ENCODE measurements at regions of chr9 and their contacts with region 1.

Region 1: DNA sequence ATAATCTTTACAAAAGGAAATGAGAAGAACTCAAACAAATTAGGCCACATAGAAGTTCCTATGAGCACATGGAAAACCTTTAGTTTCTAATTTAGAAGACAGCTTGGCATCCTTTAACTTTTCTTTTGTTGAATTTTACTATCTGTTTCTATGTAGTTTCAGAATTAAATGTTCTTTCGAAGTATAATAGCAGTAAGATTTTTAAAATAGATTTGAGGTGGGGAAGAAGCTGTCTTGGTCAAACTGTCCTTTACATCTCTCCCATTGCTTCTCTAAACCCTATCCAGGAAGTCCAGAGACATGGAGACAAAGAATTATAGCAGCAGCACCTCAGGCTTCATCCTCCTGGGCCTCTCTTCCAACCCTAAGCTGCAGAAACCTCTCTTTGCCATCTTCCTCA is at the start of gene OR1L4:
- DNase-seq: no peak
- H3K4me3 ChIP-seq: no peak within 1 kb of the TSS
- H3K27ac ChIP-seq: no peak within 1 kb of the TSS
- H3K4me1 ChIP-seq: no peaks in the 10 kb centered on the region
- H3K27me3 ChIP-seq: no peaks in the 10 kb centered on the region
- CTCF ChIP-seq: no peak
- total RNA-seq, gene OR1L4: not detected in 2 replicates

Region 2: DNA sequence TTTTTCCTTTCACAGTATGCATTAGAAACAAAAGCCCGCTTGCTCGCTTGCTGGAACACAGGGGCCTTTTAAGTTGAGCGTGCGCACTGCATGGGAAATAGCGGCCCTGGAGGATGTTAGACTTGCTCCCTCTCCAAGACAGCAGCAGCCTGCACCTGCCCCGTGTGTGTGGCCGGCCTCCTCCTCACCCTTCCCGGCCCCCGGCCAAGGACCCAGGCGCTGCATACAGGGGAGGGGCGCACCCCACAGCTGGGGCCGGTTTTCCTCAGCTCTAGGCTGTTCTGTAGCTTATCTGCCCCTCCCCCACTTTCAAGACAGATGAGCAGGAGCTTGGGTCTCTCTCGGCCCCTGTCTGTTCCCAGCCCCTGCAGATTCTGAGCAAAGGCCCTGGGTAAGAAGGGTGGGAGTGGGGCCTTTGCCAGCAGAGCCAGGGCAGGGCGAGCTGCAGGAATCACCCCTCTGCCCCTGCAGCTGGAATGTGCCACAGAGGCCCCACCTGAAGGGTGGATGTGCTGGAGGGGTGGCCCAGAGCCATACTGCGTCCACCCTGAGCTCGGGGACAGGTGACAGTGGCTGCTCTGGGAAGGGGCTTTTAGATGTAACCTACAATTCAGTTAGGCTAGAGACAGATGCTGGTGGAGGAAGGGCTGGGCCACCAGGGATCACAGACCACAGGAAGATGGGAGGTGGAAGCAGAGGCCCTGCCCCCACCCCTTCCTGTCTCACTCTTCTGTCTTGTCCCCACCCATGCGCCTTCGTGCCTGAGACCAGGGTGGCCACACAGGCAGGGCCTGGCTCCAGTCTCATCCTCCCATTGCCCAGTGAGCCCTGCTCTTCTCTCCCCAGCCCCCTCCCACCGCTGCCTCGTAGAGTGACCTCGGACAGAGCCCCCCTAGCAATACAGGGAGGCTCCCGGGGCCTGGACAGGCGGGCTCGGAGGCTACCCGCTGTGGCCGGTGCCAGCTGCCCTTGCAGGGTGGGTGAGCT is 939.9 kb before region 1 on chr9:
- CTCF ChIA-PET with region 1: no interaction called
- POLR2A ChIA-PET with region 1: no interaction called
- intact Hi-C with region 1: no loop called
- DNase-seq: no peak
- H3K4me3 ChIP-seq: no peak overlapping the region
- H3K27ac ChIP-seq: no peak overlapping the region
- H3K4me1 ChIP-seq: no peaks in the 10 kb centered on the region
- H3K27me3 ChIP-seq: no peaks in the 10 kb centered on the region
- CTCF ChIP-seq: no peak

Region 3: DNA sequence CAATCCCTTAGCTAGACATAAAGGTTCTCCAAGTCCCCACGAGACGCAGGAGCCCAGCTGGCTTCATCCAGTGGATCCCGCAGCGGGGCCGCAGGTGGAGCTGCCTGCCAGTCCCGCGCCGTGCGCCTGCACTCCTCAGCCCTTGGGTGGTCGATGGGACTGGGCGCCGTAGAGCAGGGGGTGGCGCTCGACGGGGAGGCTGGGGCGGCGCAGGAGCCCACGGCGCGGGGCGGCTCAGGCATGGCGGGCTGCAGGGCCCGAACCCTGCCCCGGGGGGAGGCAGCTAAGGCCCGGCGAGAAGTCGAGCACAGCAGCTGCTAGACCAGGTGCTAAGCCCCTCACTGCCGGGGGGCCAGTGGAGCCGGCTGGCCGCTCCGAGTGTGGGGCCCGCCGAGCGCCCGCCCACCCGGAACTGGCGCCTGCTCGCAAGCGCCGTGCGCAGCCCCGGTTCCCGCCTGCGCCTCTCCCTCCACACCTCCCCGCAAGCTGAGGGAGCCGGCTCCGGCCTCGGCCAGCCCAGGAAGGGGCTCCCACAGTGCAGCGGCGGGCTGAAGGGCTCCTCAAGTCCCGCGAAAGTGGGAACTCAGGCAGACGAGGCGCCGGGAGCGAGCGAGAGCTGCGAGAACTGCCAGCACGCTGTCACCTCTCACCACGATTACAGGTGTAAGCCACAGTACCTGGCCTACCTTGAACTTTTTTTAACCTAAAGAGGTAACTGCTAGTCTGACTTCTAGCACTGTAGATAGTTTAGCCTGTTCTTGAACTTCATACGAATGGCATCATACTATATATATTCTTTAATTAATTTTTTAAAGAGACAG is 317.4 kb before region 1 on chr9:
- CTCF ChIA-PET with region 1: no interaction called
- POLR2A ChIA-PET with region 1: no interaction called
- intact Hi-C with region 1: no loop called
- DNase-seq: no peak
- H3K4me3 ChIP-seq: no peak overlapping the region
- H3K27ac ChIP-seq: no peak overlapping the region
- H3K4me1 ChIP-seq: no peaks in the 10 kb centered on the region
- H3K27me3 ChIP-seq: 0 out of 2 replicates have a peak, but pooled peaks cover 2% of the 10 kb centered on the region
- CTCF ChIP-seq: no peak

Region 4: DNA sequence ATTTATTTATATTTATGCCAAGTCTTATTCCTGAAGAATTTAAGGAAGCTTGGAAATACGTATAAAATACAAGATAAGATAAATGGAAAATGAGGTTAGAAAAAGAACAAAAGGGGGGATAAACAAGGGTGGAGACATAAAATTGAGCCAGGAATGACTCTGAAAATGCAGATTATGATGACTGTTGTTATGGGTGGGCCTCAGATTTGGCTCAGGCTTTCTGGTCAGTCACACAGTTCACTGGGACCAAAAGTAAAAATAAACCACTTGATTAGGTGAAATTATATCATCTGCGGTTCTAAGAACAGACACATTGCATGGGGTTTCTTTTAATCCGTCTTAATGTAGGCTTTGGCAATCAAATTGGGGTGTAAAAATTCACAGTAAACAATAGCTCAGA is 297.0 kb before region 1 on chr9:
- CTCF ChIA-PET with region 1: no interaction called
- POLR2A ChIA-PET with region 1: no interaction called
- intact Hi-C with region 1: no loop called
- DNase-seq: no peak
- H3K4me3 ChIP-seq: no peak overlapping the region
- H3K27ac ChIP-seq: no peak overlapping the region
- H3K4me1 ChIP-seq: no peaks in the 10 kb centered on the region
- H3K27me3 ChIP-seq: 0 out of 2 replicates have a peak, but pooled peaks cover 9% of the 10 kb centered on the region
- CTCF ChIP-seq: no peak

Region 5: GRCh38 chr9:122526600-122526999 is 197.1 kb before region 1 on chr9:
- CTCF ChIA-PET with region 1: no interaction called
- POLR2A ChIA-PET with region 1: no interaction called
- intact Hi-C with region 1: no loop called
- DNase-seq: no peak
- H3K4me3 ChIP-seq: no peak overlapping the region
- H3K27ac ChIP-seq: no peak overlapping the region
- H3K4me1 ChIP-seq: no peaks in the 10 kb centered on the region
- H3K27me3 ChIP-seq: peaks cover 43% of the 10 kb centered on the region
- CTCF ChIP-seq: no peak

Region 6: GRCh38 chr9:122742003-122742402 is 18.3 kb after region 1 on chr9 and contains the start of gene OR1L6:
- CTCF ChIA-PET with region 1: no interaction called
- POLR2A ChIA-PET with region 1: interaction called, 14 read pairs
- intact Hi-C with region 1: no loop called
- DNase-seq: no peak
- H3K4me3 ChIP-seq: no peak within 1 kb of the TSS
- H3K27ac ChIP-seq: no peak within 1 kb of the TSS
- H3K4me1 ChIP-seq: no peaks in the 10 kb centered on the region
- H3K27me3 ChIP-seq: peaks cover 18% of the 10 kb centered on the region; the same call in 1 of the 2 replicates
- CTCF ChIP-seq: no peak
- total RNA-seq, gene OR1L6: not detected in 2 replicates

Measured in PC-9 (cell line).